B cell (primary cell): ENCODE measurements at regions of chrX and their contacts with region 1.

Region 1: GRCh38 chrX:39652336-39653131 is 445.2 kb downstream of the BCOR start:
- DNase-seq: peak; percentile 16
- ATAC-seq: no peak
- H3K4me3 ChIP-seq: no peak overlapping the region
- H3K4me3 Mint-ChIP-seq: no peak overlapping the region
- H3K27ac ChIP-seq: no peak overlapping the region
- H3K27ac Mint-ChIP-seq: no peak overlapping the region
- H3K4me1 ChIP-seq: no peaks in the 10 kb centered on the region
- H3K4me1 Mint-ChIP-seq: no peaks in the 10 kb centered on the region
- H3K27me3 ChIP-seq: peaks cover 0 to 3% (median 0%) of the 10 kb centered on the region in 4 experiments
- H3K27me3 Mint-ChIP-seq: peaks cover 18% of the 10 kb centered on the region
- CTCF ChIP-seq: peak; percentile 26

Region 2: DNA sequence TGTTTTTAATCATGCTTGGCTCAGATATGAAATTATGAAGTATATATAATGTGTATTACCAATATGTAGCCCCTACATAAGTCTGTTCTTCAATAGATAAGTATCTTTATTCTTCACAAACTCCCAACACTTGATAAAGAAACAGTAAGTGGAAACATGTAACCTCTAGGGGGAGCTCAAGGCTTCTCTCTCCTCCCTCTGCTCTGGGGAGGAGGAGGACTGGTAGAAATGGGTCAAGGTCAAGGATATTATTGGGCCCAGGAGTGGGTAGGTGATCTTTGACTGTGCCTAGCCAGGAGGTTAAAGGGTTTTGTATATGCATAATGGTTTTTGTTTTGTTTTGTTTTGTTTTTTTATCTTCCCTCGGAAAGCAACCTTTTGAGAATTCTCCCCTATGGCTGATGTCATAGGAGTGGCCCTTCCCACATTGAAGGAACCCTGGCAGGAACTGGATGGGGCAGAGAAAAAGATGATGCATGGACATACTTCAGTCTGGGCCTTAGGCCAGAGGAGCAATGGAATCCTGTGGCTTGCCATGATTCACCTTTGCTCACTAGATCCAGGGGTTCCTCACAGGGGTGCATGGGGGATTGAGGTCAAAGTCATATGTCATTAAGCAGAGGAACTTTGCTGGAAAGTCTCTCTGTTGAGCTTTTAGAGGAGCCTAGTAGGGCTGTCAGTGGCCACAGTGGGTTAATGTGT is 390.9 kb before region 1 on chrX:
- CTCF ChIA-PET with region 1: interaction called, 4 read pairs
- POLR2A ChIA-PET with region 1: no interaction called
- intact Hi-C with region 1: loop called (anchors 5 kb)
- DNase-seq: peak; percentile 53
- ATAC-seq: no peak
- H3K4me3 ChIP-seq: no peak overlapping the region
- H3K4me3 Mint-ChIP-seq: no peak overlapping the region
- H3K27ac ChIP-seq: no peak overlapping the region
- H3K27ac Mint-ChIP-seq: no peak overlapping the region
- H3K4me1 ChIP-seq: peaks cover 0 to 3% of the 10 kb centered on the region in 2 donors
- H3K4me1 Mint-ChIP-seq: peaks cover 9% of the 10 kb centered on the region
- H3K27me3 ChIP-seq: no peaks in the 10 kb centered on the region
- H3K27me3 Mint-ChIP-seq: no peaks in the 10 kb centered on the region
- CTCF ChIP-seq: peak; percentile 61

Region 3: DNA sequence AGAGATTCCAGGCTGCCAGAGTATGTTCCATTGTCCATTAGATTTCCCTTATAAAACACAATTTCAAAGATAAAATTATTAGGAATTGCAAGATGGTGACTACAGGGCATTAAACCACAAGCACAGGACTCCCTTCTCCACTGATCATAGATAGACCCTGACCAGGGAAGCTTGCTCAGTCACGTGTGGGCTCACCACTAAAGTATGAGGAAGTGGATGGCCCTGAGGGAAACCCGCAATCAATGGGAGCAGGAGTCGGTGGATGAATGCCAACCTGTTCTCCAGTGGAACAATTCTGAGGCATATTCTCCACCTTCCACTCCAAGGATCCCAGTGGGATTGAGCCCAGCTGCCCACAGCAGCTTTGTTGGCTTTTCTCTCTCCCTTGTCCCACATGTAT is 70.4 kb before region 1 on chrX:
- CTCF ChIA-PET with region 1: no interaction called
- POLR2A ChIA-PET with region 1: no interaction called
- intact Hi-C with region 1: no loop called
- DNase-seq: no peak
- ATAC-seq: no peak
- H3K4me3 ChIP-seq: no peak overlapping the region
- H3K4me3 Mint-ChIP-seq: no peak overlapping the region
- H3K27ac ChIP-seq: no peak overlapping the region
- H3K27ac Mint-ChIP-seq: no peak overlapping the region
- H3K4me1 ChIP-seq: peaks cover 3 to 10% of the 10 kb centered on the region in 2 donors
- H3K4me1 Mint-ChIP-seq: peaks cover 9% of the 10 kb centered on the region
- H3K27me3 ChIP-seq: peaks cover 0 to 2% (median 0%) of the 10 kb centered on the region in 4 experiments
- H3K27me3 Mint-ChIP-seq: peaks cover 8% of the 10 kb centered on the region
- CTCF ChIP-seq: no peak